ENCODE measurements at regions of chr11 and their contacts with region 1.

Region 1: DNA sequence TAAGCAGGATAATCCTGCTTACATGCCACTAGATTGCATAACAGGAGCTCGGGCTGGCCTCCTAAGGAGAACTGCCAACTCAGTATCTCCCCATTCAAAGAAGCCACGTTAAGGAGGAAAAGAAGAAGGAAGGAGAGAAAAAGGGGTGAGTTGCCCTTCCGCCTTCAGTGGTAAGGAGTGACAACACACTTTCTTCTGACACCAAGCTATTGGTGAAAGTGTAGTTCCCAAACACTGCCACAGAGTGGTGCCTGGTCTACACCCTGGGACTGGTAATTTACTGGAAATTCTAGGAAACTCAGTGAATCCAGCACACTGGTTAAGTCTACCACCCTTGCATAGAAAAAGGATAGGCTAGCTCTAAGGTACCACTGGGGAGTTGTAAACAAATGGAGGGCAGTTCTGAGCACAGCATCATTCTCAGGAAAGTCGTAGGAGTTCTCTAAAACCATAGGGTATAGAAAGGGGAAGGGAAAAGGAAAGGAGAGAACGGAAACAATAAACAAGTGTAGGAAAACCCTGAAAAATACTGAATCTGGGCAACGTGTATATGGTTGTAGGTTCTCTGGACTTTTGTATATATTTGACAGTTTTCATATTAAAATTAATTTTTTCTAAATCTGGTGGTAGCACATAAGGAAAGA is 58.2 kb downstream of the RRAS2 start:
- DNase-seq: peak; percentile 71
- ATAC-seq: peak; percentile 95
- H3K4me3 Mint-ChIP-seq: no peak overlapping the region
- H3K27ac Mint-ChIP-seq: no peak overlapping the region
- H3K4me1 Mint-ChIP-seq: peaks cover 23% of the 10 kb centered on the region
- H3K27me3 Mint-ChIP-seq: no peaks in the 10 kb centered on the region
- CTCF ChIP-seq: peak; percentile 69

Region 2: DNA sequence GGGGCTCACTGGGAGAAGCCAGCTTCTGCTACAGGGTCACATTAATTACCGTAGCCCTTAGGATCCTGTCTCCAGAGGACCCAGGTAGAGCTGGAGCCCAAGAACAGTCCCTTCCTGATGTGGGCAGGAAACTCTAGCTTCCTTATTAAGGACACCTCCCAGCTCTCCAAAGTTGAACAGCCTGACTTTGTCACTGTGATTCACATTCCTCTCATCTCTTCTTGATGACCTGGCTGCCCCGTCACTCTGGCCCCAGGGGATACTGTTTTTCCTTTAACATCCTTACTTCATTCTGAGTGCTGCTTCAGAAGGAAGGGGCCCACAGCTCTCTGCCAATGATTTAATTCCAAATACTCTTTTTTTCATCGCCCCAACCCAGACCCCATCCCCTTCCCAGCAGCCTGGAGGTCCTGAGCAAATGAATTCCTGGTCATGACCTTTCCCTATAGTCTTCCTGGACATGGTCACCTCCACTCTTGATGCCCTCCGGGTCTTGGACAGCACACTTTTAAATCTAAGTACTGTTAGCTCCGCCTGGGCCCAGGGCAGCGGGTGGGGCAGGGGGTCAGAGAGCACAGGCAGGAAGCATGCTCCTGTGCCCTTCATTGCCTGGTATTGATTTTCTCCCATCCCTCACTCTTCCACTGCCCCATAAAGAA is 360.7 kb before region 1 on chr11:
- CTCF ChIA-PET with region 1: no interaction called
- POLR2A ChIA-PET with region 1: no interaction called
- intact Hi-C with region 1: no loop called
- DNase-seq: no peak
- ATAC-seq: no peak
- H3K4me3 Mint-ChIP-seq: no peak overlapping the region
- H3K27ac Mint-ChIP-seq: no peak overlapping the region
- H3K4me1 Mint-ChIP-seq: peaks cover 31% of the 10 kb centered on the region
- H3K27me3 Mint-ChIP-seq: no peaks in the 10 kb centered on the region
- CTCF ChIP-seq: no peak

Region 3: DNA sequence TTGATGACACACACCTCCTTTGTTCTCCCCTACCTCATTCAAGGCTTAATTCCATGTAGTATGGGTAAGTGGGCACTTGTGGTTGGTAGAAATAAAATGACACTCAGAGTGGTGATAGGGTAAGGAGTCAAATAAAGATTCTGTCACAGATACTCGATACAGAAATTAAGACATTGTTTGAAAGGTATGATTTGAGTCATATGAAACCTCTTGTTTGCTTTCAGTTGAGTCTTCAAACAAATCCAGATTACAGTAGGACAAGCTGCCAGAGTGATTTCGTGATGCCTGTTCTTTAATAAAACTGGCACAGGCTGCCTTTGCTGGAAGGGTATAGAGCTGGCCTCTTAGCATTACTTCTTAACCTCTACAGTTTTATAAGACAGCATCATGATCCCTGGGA is 155.8 kb before region 1 on chr11:
- CTCF ChIA-PET with region 1: no interaction called
- POLR2A ChIA-PET with region 1: no interaction called
- intact Hi-C with region 1: no loop called
- DNase-seq: no peak
- ATAC-seq: peak; percentile 91
- H3K4me3 Mint-ChIP-seq: no peak overlapping the region
- H3K27ac Mint-ChIP-seq: no peak overlapping the region
- H3K4me1 Mint-ChIP-seq: peaks cover 12% of the 10 kb centered on the region
- H3K27me3 Mint-ChIP-seq: no peaks in the 10 kb centered on the region
- CTCF ChIP-seq: no peak

Region 4: GRCh38 chr11:14288189-14288935 is 12.4 kb before region 1 on chr11:
- CTCF ChIA-PET with region 1: interaction called, 38 read pairs
- POLR2A ChIA-PET with region 1: no interaction called
- intact Hi-C with region 1: no loop called
- DNase-seq: no peak
- ATAC-seq: peak; percentile 39
- H3K4me3 Mint-ChIP-seq: no peak overlapping the region
- H3K27ac Mint-ChIP-seq: peak overlapping the region; percentile 85
- H3K4me1 Mint-ChIP-seq: peaks cover 14% of the 10 kb centered on the region
- H3K27me3 Mint-ChIP-seq: no peaks in the 10 kb centered on the region
- CTCF ChIP-seq: no peak

Region 5: DNA sequence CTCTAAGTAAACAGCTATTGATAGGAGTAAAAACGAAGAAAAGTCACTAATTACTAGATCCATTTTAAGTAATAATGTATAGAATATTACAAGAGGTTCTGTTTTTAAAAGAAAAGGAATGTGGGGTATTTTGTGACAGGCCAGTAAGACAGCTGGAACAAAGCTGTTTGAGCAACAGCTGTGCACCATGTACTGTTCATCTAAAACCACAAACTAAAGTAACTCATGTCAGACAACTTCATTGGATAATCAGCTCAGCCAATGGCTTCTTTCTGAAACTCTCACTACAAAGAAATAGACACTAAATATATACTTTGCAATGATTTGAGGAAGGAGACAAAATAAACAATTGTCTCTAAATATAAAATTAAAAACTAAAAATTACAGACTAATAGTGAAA is 42.1 kb after region 1 on chr11:
- CTCF ChIA-PET with region 1: interaction called, 14 read pairs
- POLR2A ChIA-PET with region 1: interaction called, 3 read pairs
- intact Hi-C with region 1: no loop called
- DNase-seq: no peak
- ATAC-seq: peak; percentile 42
- H3K4me3 Mint-ChIP-seq: no peak overlapping the region
- H3K27ac Mint-ChIP-seq: no peak overlapping the region
- H3K4me1 Mint-ChIP-seq: peaks cover 57% of the 10 kb centered on the region
- H3K27me3 Mint-ChIP-seq: no peaks in the 10 kb centered on the region
- CTCF ChIP-seq: no peak

Region 6: GRCh38 chr11:14373931-14374646 is 73.3 kb after region 1 on chr11:
- CTCF ChIA-PET with region 1: interaction called, 14 read pairs
- POLR2A ChIA-PET with region 1: no interaction called
- intact Hi-C with region 1: no loop called
- DNase-seq: no peak
- ATAC-seq: peak; percentile 17
- H3K4me3 Mint-ChIP-seq: no peak overlapping the region
- H3K27ac Mint-ChIP-seq: peak overlapping the region; percentile 21
- H3K4me1 Mint-ChIP-seq: peaks cover 63% of the 10 kb centered on the region
- H3K27me3 Mint-ChIP-seq: peaks cover 3% of the 10 kb centered on the region
- CTCF ChIP-seq: no peak

Region 7: DNA sequence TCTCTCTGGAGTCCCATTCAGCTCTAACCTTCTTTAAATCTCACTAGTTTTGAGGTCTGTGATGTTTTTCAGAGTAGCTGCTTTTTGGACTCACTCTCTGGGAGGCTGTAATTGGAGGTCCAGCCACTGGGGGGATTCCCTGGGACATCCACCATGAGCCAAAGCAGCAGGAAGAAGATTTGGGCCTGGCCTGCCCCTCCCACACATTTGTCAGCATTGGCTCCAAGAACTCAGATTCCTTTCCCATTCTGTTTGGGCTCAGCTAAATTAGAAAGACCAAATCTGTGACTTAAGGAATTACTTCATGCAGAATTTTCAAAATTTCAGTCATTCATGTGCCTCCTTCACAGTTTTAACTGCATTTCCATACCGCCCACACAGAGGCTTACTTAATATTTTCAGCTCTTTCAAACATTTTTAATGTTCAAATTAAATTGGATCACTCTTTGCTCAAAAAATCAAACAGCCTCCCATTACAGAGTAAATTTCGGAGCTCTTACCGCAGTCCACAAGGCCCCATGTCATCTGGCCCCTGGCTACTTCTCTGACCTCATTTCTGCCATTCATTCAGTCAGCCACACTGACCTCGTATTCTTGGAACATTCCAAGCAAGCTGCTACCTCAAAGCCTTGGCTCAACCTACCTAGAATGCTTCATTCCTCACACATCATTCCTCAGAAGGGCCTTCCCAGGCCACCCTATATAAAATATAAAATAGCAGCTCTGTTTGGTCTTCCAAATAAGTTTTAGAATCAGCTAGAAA is 112.7 kb after region 1 on chr11:
- CTCF ChIA-PET with region 1: interaction called, 90 read pairs
- POLR2A ChIA-PET with region 1: interaction called, 3 read pairs
- intact Hi-C with region 1: loop called (anchors 5 kb)
- DNase-seq: peak; percentile 62
- ATAC-seq: no peak
- H3K4me3 Mint-ChIP-seq: no peak overlapping the region
- H3K27ac Mint-ChIP-seq: peak overlapping the region; percentile 87
- H3K4me1 Mint-ChIP-seq: peaks cover 71% of the 10 kb centered on the region
- H3K27me3 Mint-ChIP-seq: no peaks in the 10 kb centered on the region
- CTCF ChIP-seq: peak; percentile 56

Region 8: DNA sequence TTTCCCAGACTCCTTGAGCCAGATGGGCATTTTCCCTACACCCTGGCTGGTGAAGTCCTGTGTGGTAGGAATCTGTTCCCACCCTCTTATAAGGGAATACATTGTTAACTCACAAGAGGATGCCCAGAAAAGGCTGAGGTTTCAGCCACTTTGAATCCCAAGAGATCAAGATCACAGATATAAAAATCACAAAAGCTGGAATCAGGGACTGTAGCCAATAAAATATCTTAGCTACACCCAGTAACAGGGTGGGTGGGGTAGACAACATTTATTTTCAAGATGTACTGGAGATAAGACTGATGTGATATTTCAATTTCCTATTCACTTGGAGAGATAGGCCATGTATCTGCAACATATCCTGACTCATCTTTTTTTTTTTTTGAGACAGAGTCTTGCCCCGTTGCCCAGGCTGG is 148.5 kb after region 1 on chr11:
- CTCF ChIA-PET with region 1: interaction called, 128 read pairs
- POLR2A ChIA-PET with region 1: interaction called, 4 read pairs
- intact Hi-C with region 1: loop called (anchors 2 kb)
- DNase-seq: no peak
- ATAC-seq: no peak
- H3K4me3 Mint-ChIP-seq: no peak overlapping the region
- H3K27ac Mint-ChIP-seq: no peak overlapping the region
- H3K4me1 Mint-ChIP-seq: peaks cover 53% of the 10 kb centered on the region
- H3K27me3 Mint-ChIP-seq: no peaks in the 10 kb centered on the region
- CTCF ChIP-seq: no peak

Measured in activated CD8-positive, alpha-beta T cell treated with anti-CD3 and anti-CD28 coated beads for 36 hours (primary cell).